Posterior vena cava (tissue), 2 donors: ENCODE measurements at regions of chr10 and their contacts with region 1.

Region 1: GRCh38 chr10:111303887-111304286 is 227.1 kb downstream of the ADRA2A start:
- DNase-seq: no peak

Region 2: GRCh38 chr10:111338805-111339204 is 34.9 kb after region 1 on chr10:
- intact Hi-C with region 1: loop called in 1 of 2 experiments (anchors 1 kb)
- DNase-seq: no peak

Region 3: DNA sequence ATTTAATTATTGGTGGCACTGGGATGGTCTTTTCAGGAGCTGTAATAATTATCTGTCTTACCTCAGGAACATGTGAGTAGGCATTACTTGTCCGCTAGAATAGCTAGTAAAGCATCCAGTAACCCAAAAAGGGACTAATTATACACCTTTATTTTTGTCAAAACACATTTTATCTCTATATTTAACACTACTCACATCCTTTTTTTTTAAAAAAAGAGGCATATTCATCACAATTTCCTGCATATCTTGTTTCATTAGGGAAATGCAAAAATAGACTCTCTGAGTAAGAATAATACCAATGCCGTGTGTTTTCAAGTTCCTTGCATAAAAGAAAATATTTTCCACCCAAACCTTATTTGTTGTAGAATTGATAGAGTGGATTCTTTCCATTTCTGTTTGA is 1242.6 kb after region 1 on chr10:
- intact Hi-C with region 1: loop called in 1 of 2 experiments (anchors 10 kb)
- DNase-seq: no peak